ENCODE measurements at regions of chr17 and their contacts with region 1.

Region 1: GRCh38 chr17:4366327-4367063 is at the start of gene UBE2G1:
- DNase-seq: peak; percentile 98
- H3K4me3 ChIP-seq: peak within 1 kb of the TSS; percentile 98
- H3K27ac ChIP-seq: peak within 1 kb of the TSS; percentile 99
- H3K4me1 ChIP-seq: peaks cover 77% of the 10 kb centered on the region
- CTCF ChIP-seq: peak; percentile 76
- total RNA-seq, gene UBE2G1: 115 and 124 TPM in 2 replicates

Region 2: GRCh38 chr17:3965118-3965803 is 401.2 kb before region 1 on chr17:
- CTCF ChIA-PET with region 1: no interaction called
- POLR2A ChIA-PET with region 1: no interaction called
- intact Hi-C with region 1: loop called (anchors 5 kb)
- DNase-seq: peak; percentile 87
- H3K4me3 ChIP-seq: peak overlapping the region; percentile 87
- H3K27ac ChIP-seq: peak overlapping the region; percentile 94
- H3K4me1 ChIP-seq: peaks cover 51% of the 10 kb centered on the region
- CTCF ChIP-seq: no peak; the same call in 1 of the 2 replicates

Region 3: DNA sequence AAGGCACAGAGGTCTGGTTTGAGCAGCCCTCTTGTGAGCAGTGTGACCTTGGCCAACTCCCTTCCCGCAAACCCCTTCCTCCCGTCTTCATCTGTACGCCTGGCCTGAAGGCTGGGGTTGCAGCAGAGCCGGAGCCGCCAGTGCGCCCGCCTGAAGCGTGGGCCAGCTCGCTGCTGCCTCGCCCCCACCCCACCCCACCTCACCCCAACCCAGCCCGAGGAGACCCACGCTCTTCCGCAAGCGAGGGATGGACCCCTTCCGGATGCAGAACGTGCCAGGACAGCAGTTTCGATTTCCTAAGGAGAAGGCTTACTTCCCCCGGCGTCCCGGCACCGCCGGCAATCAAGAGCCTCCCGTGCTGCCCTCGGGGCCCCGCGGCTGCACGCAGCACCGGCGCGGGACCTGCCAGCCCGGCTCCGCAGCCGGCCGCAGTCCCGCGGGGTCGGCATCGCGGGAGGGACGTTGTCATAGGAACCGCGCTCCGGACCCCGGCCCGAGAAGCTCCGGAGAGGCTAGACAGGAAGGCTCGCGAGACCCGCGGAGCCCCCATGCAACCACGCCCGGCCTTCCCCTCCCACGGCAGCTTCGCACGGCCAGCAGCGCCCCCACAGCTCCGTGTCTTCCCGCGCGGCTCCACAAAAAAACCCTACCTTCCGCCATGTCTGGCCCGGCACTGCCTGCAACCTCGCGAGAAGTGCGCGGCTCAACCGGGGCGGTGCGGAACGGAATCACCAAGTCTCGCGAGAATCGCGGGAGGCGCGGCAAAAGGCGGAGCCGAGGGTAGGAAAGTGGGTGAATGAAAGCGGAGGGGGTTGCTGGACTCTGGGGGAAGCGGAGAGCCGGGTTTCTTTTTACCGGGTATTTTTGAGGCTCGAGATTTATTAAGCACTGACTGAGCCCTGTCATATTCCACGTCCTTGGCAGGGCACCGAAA is 102.9 kb before region 1 on chr17 and contains the start of gene ANKFY1:
- CTCF ChIA-PET with region 1: no interaction called
- POLR2A ChIA-PET with region 1: no interaction called
- intact Hi-C with region 1: loop called (anchors 5 kb)
- DNase-seq: peak; percentile 97
- H3K4me3 ChIP-seq: peak within 1 kb of the TSS; percentile 97
- H3K27ac ChIP-seq: peak within 1 kb of the TSS; percentile 53
- H3K4me1 ChIP-seq: peaks cover 19% of the 10 kb centered on the region
- CTCF ChIP-seq: peak; percentile 42
- total RNA-seq, gene ANKFY1: 25.8 and 25.9 TPM in 2 replicates

Region 4: GRCh38 chr17:4381690-4382671 is 15.5 kb after region 1 on chr17:
- CTCF ChIA-PET with region 1: no interaction called
- POLR2A ChIA-PET with region 1: interaction called, 10 read pairs
- intact Hi-C with region 1: no loop called
- DNase-seq: no peak
- H3K4me3 ChIP-seq: no peak overlapping the region
- H3K27ac ChIP-seq: peak overlapping the region; percentile 86
- H3K4me1 ChIP-seq: peaks cover 64% of the 10 kb centered on the region
- CTCF ChIP-seq: no peak

Region 5: DNA sequence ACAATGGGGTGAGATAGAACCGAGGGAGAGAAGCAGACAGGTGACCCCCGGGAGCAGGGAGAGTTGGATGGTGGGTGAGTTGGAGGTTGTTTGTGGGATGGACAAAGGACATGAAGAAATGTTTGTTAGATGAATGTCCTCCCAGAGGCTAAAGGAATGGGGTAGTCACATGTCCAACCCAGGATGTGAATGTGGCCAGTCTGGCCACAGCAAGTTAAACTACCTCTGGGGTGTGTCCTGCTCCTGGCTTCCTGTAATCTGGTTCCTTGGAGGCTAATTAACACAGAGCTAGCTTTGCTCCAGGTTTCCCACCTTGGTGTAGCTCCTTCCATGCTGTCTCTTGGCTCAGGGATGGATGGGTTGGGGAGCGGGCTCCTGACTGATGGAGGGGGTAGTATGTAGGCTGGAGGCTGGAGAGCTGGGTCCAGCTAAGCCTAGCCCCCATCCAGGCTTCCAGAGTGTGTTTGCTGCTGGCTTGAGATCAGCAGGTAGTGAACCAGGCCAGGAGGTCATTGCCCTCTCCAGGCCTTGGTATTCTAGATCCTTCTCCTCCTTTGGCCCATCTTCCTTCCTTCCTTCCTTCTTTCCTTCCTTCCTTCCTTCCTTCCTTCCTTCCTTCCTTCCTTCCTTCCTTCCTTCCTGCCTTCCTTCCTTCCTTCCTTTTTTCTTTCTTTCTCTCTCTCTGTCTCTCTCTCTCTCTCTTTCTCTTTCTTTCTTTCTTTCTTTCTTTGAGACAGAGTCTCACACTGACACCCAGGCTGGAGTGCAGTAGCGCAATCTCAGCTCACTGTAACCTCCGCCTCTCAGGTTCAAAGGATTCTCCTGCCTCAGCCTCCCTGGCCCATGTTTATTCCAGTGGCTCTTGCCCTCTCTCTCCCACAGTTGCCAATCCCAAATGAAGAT is 28.0 kb after region 1 on chr17:
- CTCF ChIA-PET with region 1: no interaction called
- POLR2A ChIA-PET with region 1: interaction called, 16 read pairs
- intact Hi-C with region 1: loop called (anchors 1 kb)
- DNase-seq: no peak
- H3K4me3 ChIP-seq: peak overlapping the region; percentile 59
- H3K27ac ChIP-seq: peak overlapping the region; percentile 97
- H3K4me1 ChIP-seq: peaks cover 83% of the 10 kb centered on the region
- CTCF ChIP-seq: no peak

Region 6: GRCh38 chr17:4433515-4434031 is 67.1 kb after region 1 on chr17 and contains the start of gene SPNS3:
- CTCF ChIA-PET with region 1: no interaction called
- POLR2A ChIA-PET with region 1: no interaction called
- intact Hi-C with region 1: no loop called
- DNase-seq: peak; percentile 93
- H3K4me3 ChIP-seq: peak within 1 kb of the TSS; percentile 53
- H3K27ac ChIP-seq: peak within 1 kb of the TSS; percentile 74
- H3K4me1 ChIP-seq: peaks cover 68% of the 10 kb centered on the region
- CTCF ChIP-seq: no peak
- total RNA-seq, gene SPNS3: 43.8 and 51.2 TPM in 2 replicates

Region 7: DNA sequence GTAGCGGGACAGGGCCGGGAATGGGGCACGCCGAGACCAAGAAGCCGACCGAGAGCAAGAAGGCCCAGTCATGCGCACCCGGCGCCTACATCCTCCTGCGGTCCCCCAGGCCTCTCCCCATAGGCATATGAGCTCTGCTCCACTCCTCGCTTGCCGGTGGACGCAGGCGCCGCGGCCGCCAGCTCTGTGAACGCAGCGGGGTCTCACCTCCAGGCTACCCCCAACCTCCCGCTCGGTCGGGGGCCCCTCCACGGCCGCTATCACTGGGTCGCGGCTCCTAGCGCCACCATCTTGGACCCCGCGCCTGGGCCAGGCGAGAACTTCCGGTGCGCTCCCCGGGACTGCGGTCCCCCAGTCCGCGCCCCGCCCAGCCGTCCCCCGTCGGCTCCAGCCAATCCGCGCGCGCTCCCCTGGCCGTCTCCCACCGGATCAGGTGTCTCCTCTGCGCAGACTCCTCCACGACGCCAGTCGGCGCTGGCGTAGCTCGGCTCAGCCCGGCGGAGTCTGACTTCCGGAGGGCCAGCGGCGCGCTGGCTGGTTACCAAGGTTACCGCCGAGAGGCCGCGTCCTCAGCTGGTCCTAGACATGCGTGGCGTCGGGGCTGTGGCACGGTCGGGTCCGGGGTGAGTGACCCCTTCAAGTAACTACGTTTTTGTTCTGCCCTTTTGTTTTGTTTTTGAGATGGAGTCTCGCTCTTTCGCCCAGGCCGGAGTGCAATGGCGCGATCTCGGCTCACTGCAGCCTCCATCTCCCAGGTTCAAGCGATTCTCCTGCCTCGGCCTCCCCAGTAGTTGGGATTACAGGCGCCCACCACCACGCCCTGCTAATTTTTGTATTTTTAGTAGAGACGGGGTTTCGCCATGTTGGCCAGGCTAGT is 825.3 kb after region 1 on chr17 and contains the start of gene ZNF594:
- CTCF ChIA-PET with region 1: no interaction called
- POLR2A ChIA-PET with region 1: no interaction called
- intact Hi-C with region 1: loop called (anchors 10 kb)
- DNase-seq: peak; percentile 97
- H3K4me3 ChIP-seq: peak within 1 kb of the TSS; percentile 97
- H3K27ac ChIP-seq: peak within 1 kb of the TSS; percentile 46
- H3K4me1 ChIP-seq: peaks cover 24% of the 10 kb centered on the region
- CTCF ChIP-seq: peak; percentile 86
- total RNA-seq, gene ZNF594: 42.5 and 43.4 TPM in 2 replicates

Measured in OCI-LY7 (cell line).